ENCODE measurements at regions of chr19 and their contacts with region 1.

Region 1: DNA sequence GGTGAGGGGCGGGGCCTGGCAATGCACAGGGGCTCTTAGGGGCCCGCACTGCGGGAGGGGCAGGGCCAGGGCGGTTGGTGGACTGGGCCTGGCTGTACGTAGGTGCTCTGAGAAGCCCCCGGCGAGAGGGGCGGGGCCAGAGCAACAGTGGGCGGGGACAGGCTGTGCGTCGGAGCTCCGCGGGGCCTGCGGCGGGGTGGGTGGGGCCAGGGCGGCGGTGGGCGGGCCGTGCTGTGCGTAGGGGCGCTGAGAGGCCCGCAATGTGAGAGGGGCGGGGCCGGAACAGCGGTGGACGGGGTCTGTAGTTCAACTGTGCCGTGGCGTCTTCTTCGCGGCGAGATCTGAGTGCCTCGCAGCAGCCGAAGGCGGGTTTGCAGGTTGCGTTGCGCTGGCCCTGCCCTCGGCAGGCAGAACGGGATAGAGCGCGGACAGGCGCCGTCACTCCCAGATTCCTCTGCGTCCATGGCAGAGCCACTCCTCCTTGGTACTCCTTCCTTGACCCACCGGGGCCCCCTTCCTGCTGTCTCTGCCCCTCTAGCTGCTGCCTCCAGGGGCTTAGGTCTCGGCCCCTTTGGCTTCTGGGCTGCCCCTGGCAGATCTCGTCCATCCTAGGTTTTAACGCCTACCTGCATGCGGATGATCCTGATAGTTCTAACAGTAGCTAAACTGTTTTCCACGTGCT is 33.2 kb downstream of the CCNE1 start:
- DNase-seq: peak; percentile 86
- H3K4me3 ChIP-seq: peak overlapping the region; percentile 59 to 65 (median 65)
- H3K27ac ChIP-seq: no peak overlapping the region
- H3K4me1 ChIP-seq: peaks cover 26% of the 10 kb centered on the region
- H3K27me3 ChIP-seq: no peaks in the 10 kb centered on the region
- CTCF ChIP-seq: no peak

Region 2: DNA sequence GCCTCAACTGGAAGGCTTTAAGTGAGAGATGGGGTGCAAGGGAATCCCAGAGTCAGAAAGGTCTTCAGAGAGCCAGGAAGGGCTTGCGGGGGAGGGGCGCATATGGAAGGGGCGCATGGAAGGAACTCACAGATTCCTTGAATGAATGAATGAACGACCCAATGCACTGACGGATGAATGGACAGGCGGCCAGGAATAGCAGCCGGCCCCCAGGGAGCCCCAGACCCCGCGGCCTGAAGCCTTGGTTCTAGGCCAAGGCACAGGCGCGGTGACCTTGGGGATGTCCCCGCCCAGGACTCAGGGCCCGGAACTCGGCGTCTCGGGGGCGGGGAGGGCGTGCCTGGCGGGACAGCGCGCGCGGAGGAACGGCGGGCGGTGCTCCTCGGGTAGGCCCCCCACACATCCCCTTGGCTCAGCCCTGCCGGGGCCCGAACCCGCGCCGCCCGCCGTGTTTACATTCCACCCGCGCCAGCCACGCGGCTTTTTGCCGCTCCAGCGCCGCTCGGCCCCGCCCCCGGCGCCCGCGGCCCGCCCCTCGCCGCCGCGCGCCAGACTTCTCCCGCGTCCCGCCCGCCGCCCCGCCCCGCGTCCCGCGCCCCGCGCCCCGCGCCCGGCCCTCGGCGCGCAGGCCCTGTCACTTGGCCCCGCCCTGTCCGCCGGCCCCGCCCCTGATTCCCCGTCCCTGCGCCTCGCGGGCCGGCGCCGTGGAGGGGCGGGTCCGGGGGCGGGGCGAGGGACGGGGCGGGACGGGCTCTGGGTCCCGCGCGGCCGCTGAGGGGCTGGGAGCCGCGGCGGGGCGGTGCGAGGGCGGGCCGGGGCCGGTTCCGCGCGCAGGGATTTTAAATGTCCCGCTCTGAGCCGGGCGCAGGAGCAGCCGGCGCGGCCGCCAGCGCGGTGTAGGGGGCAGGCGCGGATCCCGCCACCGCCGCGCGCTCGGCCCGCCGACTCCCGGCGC is 33.6 kb before region 1 on chr19 and contains the start of gene CCNE1:
- CTCF ChIA-PET with region 1: no interaction called
- dilution Hi-C with region 1: no loop called
- in situ Hi-C with region 1: no loop called
- intact Hi-C with region 1: loop called (anchors 1 kb)
- DNase-seq: peak; percentile 83
- H3K4me3 ChIP-seq: peak within 1 kb of the TSS; percentile 27 to 57 (median 53)
- H3K27ac ChIP-seq: no peak within 1 kb of the TSS
- H3K4me1 ChIP-seq: peaks cover 5% of the 10 kb centered on the region
- H3K27me3 ChIP-seq: no peaks in the 10 kb centered on the region
- CTCF ChIP-seq: no peak
- total RNA-seq, gene CCNE1: 5.3 to 10.5 TPM

Region 3: GRCh38 chr19:29831041-29831548 is 13.9 kb before region 1 on chr19:
- CTCF ChIA-PET with region 1: interaction called, 16 read pairs
- dilution Hi-C with region 1: no loop called
- in situ Hi-C with region 1: no loop called
- intact Hi-C with region 1: no loop called
- DNase-seq: peak; percentile 63
- H3K4me3 ChIP-seq: no peak overlapping the region
- H3K27ac ChIP-seq: no peak overlapping the region
- H3K4me1 ChIP-seq: no peaks in the 10 kb centered on the region
- H3K27me3 ChIP-seq: no peaks in the 10 kb centered on the region
- CTCF ChIP-seq: no peak

Region 4: GRCh38 chr19:29878973-29879654 is 34.1 kb after region 1 on chr19:
- CTCF ChIA-PET with region 1: no interaction called
- dilution Hi-C with region 1: no loop called
- in situ Hi-C with region 1: no loop called
- intact Hi-C with region 1: no loop called
- DNase-seq: peak; percentile 32
- H3K4me3 ChIP-seq: no peak overlapping the region
- H3K27ac ChIP-seq: no peak overlapping the region
- H3K4me1 ChIP-seq: no peaks in the 10 kb centered on the region
- H3K27me3 ChIP-seq: no peaks in the 10 kb centered on the region
- CTCF ChIP-seq: no peak

Region 5: DNA sequence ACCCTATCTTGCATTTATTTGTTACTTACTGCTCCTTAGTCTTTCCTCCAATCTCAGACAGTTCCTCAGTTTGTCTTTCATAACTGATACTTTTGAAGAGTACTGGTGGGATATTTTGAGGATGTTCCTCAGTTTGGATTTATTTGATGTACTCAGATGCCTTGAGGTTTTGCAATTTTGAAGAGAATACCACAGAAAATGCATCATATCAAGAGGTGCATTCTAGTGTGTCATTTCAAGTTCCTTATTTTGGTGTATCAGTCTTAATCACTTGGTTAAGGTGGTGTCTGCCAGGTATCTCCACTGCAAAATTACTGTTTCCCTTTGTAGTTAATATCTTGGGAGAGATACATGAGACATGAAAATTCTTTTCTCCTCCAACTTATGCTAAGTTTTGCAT is 172.1 kb after region 1 on chr19:
- CTCF ChIA-PET with region 1: no interaction called
- dilution Hi-C with region 1: no loop called
- in situ Hi-C with region 1: no loop called
- intact Hi-C with region 1: no loop called
- DNase-seq: no peak
- H3K4me3 ChIP-seq: no peak overlapping the region
- H3K27ac ChIP-seq: no peak overlapping the region
- H3K4me1 ChIP-seq: no peaks in the 10 kb centered on the region
- H3K27me3 ChIP-seq: no peaks in the 10 kb centered on the region
- CTCF ChIP-seq: no peak

Measured in mammary epithelial cell (primary cell).